Mucosa of descending colon (tissue), 3 donors: ENCODE measurements at regions of chr1 and their contacts with region 1.

Region 1: DNA sequence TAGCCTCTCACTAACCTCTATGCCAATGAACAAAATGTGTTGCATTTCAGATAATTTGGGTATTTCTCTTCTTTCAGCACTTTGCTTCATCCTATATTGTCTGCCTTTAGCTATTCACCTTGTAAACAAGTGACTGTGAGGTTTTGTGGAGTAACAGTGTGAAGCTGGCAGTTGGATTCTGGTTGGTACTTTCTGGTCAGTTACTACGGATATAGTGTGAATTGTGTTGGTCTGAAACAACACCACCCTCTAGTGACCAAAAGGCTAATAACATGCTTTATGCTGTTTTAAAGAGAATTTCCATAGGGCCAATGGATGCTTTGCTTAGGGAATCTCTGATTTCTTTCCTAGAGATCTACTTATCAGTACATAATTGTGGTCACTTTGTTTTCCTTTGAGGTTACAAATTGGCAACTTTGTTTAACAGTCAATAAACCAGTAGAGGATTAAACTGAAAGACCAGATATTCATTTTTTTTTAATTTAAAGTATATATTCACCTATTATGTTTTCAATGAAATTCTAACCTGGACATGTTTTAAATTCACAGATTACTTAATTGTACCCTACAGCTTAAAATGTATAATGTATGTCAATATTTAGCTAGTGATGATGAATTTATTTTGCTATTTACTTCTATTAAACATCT is 2.5 kb upstream of the PTGER3 start:
- DNase-seq: peak in 1 of 3 donors; percentile 70
- ATAC-seq: peak; percentile 73
- H3K4me3 ChIP-seq: no peak overlapping the region
- H3K4me1 ChIP-seq: peaks cover 4% of the 10 kb centered on the region
- CTCF ChIP-seq: peak; percentile 53

Region 2: GRCh38 chr1:70528590-70529333 is 521.3 kb before region 1 on chr1:
- intact Hi-C with region 1: loop called in 1 of 2 experiments (anchors 10 kb)
- DNase-seq: peak in 1 of 3 donors; percentile 49
- ATAC-seq: peak; percentile 65
- H3K4me3 ChIP-seq: no peak overlapping the region
- H3K4me1 ChIP-seq: no peaks in the 10 kb centered on the region
- CTCF ChIP-seq: no peak

Region 3: GRCh38 chr1:70685300-70686241 is 364.5 kb before region 1 on chr1:
- intact Hi-C with region 1: loop called (anchors 2 to 5 kb)
- DNase-seq: peak in 2 of 3 donors; percentile 35 to 70
- ATAC-seq: peak; percentile 95
- H3K4me3 ChIP-seq: no peak overlapping the region
- H3K4me1 ChIP-seq: no peaks in the 10 kb centered on the region
- CTCF ChIP-seq: peak; percentile 79